ENCODE measurements at regions of chr2 and their contacts with region 1.

Region 1: DNA sequence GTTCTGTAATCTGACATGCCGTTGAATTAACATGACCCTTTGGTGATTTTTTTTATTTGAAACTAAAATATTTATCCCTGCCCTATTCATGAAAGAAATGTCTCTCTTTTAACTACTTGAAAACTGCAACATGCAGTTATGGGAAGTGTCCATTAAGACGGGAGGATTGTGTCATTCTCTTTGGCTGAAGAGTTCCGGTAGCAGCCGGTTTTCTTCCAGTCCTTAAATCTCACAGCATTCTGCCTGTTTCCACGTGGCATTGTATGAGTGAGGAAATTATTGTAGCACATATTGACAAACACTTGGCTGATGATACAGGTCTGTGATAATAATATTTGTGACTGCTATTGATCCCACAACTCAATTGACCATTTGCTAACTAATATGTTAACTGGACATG is 509.6 kb upstream of the POU3F3 start:
- DNase-seq: no peak
- ATAC-seq: no peak
- H3K4me3 ChIP-seq: no peak overlapping the region
- H3K4me3 Mint-ChIP-seq: no peak overlapping the region
- H3K27ac ChIP-seq: no peak overlapping the region
- H3K27ac Mint-ChIP-seq: no peak overlapping the region
- H3K4me1 ChIP-seq: no peaks in the 10 kb centered on the region
- H3K4me1 Mint-ChIP-seq: no peaks in the 10 kb centered on the region
- H3K27me3 ChIP-seq: no peaks in the 10 kb centered on the region
- H3K27me3 Mint-ChIP-seq: peaks cover 8% of the 10 kb centered on the region
- CTCF ChIP-seq: no peak

Region 2: DNA sequence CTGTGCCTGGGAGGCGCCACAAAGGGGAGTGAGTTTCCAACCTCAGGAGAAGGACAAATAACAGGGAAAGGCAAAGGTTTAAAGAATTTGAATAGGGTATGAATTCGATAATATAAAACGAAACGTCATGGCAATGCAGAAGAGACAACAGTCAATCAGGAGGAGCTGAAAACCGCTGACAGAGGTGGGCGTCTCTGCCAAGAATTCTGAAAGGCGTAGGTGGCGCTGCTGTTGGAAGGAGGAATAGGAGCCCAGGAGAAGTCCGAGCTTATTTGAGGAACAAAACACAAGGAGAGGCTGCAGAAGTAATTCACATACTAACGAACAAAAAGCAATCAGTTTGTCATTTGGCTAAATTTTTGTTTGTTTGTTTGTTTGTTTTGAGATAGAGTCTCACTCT is 23.8 kb after region 1 on chr2:
- CTCF ChIA-PET with region 1: no interaction called
- POLR2A ChIA-PET with region 1: no interaction called
- intact Hi-C with region 1: loop called in 1 of 2 experiments (anchors 2 kb)
- DNase-seq: no peak
- ATAC-seq: no peak
- H3K4me3 ChIP-seq: no peak overlapping the region
- H3K4me3 Mint-ChIP-seq: no peak overlapping the region
- H3K27ac ChIP-seq: no peak overlapping the region
- H3K27ac Mint-ChIP-seq: no peak overlapping the region
- H3K4me1 ChIP-seq: no peaks in the 10 kb centered on the region
- H3K4me1 Mint-ChIP-seq: no peaks in the 10 kb centered on the region
- H3K27me3 ChIP-seq: no peaks in the 10 kb centered on the region
- H3K27me3 Mint-ChIP-seq: peaks cover 3% of the 10 kb centered on the region
- CTCF ChIP-seq: no peak

Measured in CD8-positive, alpha-beta T cell (primary cell).